ENCODE measurements at regions of chr3 and their contacts with region 1.

Region 1: DNA sequence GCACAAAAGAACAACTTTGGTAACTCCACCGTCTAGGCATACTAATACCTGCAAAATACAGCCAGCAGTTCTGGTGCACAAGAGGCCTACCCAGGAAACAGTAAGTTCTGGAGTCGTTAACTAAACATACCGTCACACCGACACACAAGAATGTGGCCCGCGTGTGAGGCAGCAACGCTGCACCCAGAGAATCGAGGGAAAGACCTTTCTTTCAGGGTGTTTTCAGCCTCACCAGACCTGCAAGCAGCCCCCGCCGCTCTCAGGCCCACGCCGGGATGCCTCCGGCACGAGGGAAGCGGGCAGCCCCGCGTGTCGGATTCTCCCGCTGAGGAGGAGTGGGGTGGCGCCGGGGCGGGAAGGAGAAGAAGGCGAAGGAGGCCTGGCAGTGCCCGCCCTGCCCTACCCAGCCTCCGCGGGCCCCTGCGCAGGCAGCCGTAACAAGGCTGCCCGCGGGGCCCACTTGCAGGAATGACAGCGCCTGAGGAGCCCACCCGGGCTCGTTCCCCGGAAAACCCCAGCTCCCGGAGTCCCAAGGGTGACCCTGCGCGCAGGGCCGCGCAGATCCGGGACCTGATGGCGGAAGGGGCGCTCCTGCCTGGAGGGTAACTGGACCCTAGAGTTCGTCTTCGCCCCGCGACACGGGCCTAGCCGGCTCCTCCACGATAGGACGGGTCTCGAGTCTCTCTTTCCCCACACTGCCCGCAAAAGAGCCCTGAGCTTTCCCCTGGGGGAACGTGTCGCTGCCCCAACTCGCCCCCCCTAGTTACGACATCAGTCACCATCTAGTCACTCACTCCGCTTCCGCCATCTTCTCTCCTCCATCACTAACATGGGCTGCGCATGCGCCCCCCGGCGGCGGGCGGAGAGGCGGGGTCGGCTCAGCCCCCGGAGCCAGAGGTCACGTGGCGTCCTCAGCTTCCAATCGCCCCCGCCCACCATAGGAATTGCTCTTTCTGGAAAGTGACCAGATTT is at the start of gene PHC3:
- DNase-seq: peak; percentile 93
- H3K4me3 Mint-ChIP-seq: peak within 1 kb of the TSS; percentile 97
- H3K27ac Mint-ChIP-seq: peak within 1 kb of the TSS; percentile 100
- H3K4me1 Mint-ChIP-seq: peaks cover 23% of the 10 kb centered on the region
- H3K27me3 Mint-ChIP-seq: no peaks in the 10 kb centered on the region
- total RNA-seq, gene PHC3: 48.7 to 50.4 TPM

Region 2: DNA sequence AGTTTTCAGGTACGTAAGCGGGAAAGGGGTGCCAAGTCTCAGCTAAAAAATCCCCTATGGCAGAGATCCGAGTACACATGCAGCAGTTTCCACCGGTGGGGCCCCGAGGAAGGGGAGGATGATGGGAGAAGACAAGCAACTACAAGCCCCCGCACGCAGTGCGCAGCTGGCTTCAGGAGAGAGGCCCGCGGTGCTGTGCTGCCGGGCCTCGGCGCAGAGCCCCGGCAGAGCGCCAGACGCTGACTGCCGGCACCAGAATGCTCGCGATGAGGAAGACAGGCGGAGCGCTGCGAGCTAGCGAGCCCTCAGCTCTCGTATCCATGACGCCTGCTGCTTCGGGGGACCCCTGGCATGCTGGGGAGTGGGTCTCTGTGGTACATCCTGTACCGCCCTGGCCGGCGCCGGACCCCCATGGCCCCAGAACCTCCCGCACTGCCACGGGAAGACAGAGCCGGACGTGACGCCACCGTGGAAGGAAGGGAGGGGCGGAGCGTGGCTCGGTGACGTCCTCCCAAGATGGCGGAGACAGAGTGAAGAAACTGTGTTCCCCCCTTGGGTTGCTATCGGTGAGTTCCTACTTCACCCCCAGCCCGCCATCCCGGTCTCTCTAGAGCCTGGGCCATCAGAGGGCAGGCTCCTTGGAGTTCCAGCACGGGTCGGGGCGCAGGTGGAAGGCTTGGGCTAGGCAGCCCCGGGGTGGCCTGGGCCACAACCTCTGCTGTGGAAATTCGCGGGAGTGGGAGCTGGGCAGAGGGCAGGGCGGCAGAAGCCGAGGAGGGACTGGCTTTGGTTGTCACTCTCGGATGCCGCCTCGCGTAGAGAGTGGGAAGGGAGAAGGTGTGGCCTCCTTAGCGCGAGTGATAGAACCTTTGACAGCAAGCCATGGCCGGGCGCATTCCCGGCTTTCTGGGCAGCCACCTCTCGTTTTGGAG is 408.0 kb before region 1 on chr3 and contains the start of gene MYNN:
- CTCF ChIA-PET with region 1: no interaction called
- intact Hi-C with region 1: loop called (anchors 1 kb)
- DNase-seq: peak; percentile 94
- H3K4me3 Mint-ChIP-seq: peak within 1 kb of the TSS; percentile 94
- H3K27ac Mint-ChIP-seq: peak within 1 kb of the TSS; percentile 97
- H3K4me1 Mint-ChIP-seq: peaks cover 36% of the 10 kb centered on the region
- H3K27me3 Mint-ChIP-seq: no peaks in the 10 kb centered on the region
- total RNA-seq, gene MYNN: 12.0 to 13.5 TPM

Region 3: GRCh38 chr3:169931747-169932520 is 249.3 kb before region 1 on chr3:
- CTCF ChIA-PET with region 1: no interaction called
- intact Hi-C with region 1: no loop called
- DNase-seq: no peak
- H3K4me3 Mint-ChIP-seq: no peak overlapping the region
- H3K27ac Mint-ChIP-seq: no peak overlapping the region
- H3K4me1 Mint-ChIP-seq: peaks cover 4% of the 10 kb centered on the region
- H3K27me3 Mint-ChIP-seq: no peaks in the 10 kb centered on the region

Region 4: DNA sequence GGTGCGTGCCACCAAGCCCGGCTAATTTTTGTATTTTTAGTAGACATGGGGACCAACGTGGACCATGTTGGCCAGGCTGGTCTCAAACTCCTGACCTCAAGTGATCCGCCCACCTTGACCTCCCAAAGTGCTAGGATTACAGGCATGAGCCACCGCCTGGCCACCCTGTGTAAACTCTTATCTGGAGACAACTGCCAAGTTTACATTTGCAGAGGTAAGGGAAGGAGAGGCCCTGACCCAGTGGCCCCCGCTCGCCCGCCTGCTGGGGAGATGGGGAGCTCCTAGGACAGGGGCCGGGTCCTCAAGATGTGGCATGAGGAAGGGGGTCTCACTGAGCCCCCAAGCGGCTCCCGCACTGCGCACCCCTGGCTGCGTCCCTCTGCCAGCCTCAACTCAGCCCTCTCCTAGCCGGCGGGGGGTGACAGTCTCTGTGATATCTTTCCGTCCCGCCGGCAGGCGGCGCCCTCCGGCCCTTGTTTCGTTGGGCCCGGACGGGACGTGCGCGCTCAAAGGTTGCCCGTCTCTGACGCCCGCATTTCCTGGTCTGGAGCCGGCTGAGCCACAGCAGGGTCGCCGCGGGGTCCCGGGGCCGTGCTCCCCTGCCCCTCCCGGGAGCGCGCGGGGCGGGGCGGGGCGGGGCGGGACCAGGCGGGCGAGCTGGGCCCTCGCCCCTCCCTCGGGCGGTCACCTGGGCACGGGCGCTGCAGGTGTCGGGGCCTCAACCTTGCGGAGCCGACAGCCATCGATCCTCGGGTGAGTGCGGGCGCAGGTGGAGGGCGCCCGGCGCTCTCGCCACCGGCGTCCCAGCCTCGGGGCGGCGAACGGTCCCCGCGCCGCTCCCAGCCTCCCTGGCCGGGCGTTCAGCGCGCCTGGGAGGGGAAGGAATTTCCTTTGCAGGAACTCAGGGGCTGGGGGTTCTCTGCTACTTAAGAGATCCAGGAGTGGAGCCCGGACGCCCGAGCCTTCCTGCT is 143.4 kb before region 1 on chr3 and contains the start of gene GPR160:
- CTCF ChIA-PET with region 1: no interaction called
- intact Hi-C with region 1: loop called (anchors 1 kb)
- DNase-seq: peak; percentile 89
- H3K4me3 Mint-ChIP-seq: peak within 1 kb of the TSS; percentile 84
- H3K27ac Mint-ChIP-seq: no peak within 1 kb of the TSS
- H3K4me1 Mint-ChIP-seq: peaks cover 24% of the 10 kb centered on the region
- H3K27me3 Mint-ChIP-seq: no peaks in the 10 kb centered on the region
- total RNA-seq, gene GPR160: 10.3 TPM

Region 5: DNA sequence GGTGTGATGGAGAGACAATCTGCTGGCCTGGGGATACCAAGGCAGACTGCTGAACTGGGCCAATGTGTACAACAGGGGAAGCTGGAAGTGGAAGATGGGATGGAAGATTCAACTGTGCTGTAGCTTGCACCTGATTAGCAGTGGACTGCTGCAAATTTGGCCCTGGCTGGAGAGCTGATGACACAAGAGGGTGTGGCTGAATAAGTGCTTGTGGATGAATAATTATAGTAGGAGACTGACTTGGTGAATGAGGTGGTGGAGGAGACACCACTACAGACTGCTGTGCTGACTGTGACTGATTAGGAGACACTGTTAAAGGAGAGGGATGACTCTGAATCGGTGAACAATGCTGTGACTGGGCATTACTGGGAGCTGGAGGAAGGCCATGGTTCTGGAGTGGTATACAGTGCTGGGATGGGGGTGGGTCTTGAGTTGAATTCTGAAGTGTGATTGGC is 52.2 kb before region 1 on chr3:
- CTCF ChIA-PET with region 1: no interaction called
- intact Hi-C with region 1: loop called (anchors 1 kb)
- DNase-seq: peak; percentile 48
- H3K4me3 Mint-ChIP-seq: peak overlapping the region; percentile 20
- H3K27ac Mint-ChIP-seq: peak overlapping the region; percentile 76
- H3K4me1 Mint-ChIP-seq: peaks cover 40% of the 10 kb centered on the region
- H3K27me3 Mint-ChIP-seq: no peaks in the 10 kb centered on the region

Region 6: GRCh38 chr3:170203457-170203856 is 22.3 kb after region 1 on chr3:
- CTCF ChIA-PET with region 1: no interaction called
- intact Hi-C with region 1: loop called (anchors 1 kb)
- DNase-seq: no peak
- H3K4me3 Mint-ChIP-seq: no peak overlapping the region
- H3K27ac Mint-ChIP-seq: peak overlapping the region; percentile 42
- H3K4me1 Mint-ChIP-seq: peaks cover 15% of the 10 kb centered on the region
- H3K27me3 Mint-ChIP-seq: peaks cover 3% of the 10 kb centered on the region